ENCODE measurements at regions of chr11 and their contacts with region 1.

Region 1: DNA sequence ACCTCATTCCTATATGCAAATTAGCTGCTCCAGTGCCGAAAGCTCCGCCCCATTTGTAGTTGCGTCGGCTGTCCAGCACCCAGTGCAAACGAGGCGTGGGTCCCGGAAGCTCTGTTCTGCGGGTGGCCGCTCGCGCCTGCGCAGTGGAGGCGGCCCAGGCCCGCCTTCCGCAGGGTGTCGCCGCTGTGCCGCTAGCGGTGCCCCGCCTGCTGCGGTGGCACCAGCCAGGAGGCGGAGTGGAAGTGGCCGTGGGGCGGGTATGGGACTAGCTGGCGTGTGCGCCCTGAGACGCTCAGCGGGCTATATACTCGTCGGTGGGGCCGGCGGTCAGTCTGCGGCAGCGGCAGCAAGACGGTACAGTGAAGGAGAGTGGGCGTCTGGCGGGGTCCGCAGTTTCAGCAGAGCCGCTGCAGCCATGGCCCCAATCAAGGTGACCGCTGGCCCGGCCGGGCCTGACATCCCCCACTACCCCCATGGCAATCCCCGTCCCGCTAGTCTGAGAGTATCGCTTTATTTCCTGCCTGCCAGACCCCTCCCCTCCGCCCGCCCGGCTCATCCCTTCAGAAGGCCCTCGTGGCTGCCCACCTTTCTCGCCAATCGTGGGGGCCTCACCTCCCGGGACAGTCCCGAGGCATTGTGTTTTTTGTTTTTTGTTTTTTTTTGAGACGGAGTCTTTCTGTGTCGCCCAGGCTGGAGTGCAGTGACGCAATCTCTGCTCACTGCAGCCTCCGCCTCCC is at the start of gene PRDX5:
- DNase-seq: peak in 9 of 10 donors; percentile 91 to 97 (median 95)
- ATAC-seq: peak; percentile 77 to 82
- H3K4me3 Mint-ChIP-seq: peak within 1 kb of the TSS; percentile 90 to 97 (median 94)
- H3K27ac Mint-ChIP-seq: peak within 1 kb of the TSS; percentile 97 to 100 (median 99)
- H3K4me1 Mint-ChIP-seq: peaks cover 22 to 45% (median 40%) of the 10 kb centered on the region in 4 donors
- H3K27me3 Mint-ChIP-seq: no peaks in the 10 kb centered on the region
- polyA plus RNA-seq, gene PRDX5: 186 to 239 (median 206) TPM

Region 2: GRCh38 chr11:64204464-64204989 is 113.6 kb before region 1 on chr11:
- POLR2A ChIA-PET with region 1: interaction called, 20 read pairs
- DNase-seq: peak; percentile 73 to 92 (median 84)
- ATAC-seq: peak; percentile 66 to 67
- H3K4me3 Mint-ChIP-seq: peak overlapping the region; percentile 48 to 88 (median 76)
- H3K27ac Mint-ChIP-seq: peak overlapping the region; percentile 82 to 95 (median 92)
- H3K4me1 Mint-ChIP-seq: peaks cover 22 to 50% (median 48%) of the 10 kb centered on the region in 4 donors
- H3K27me3 Mint-ChIP-seq: no peaks in the 10 kb centered on the region

Region 3: DNA sequence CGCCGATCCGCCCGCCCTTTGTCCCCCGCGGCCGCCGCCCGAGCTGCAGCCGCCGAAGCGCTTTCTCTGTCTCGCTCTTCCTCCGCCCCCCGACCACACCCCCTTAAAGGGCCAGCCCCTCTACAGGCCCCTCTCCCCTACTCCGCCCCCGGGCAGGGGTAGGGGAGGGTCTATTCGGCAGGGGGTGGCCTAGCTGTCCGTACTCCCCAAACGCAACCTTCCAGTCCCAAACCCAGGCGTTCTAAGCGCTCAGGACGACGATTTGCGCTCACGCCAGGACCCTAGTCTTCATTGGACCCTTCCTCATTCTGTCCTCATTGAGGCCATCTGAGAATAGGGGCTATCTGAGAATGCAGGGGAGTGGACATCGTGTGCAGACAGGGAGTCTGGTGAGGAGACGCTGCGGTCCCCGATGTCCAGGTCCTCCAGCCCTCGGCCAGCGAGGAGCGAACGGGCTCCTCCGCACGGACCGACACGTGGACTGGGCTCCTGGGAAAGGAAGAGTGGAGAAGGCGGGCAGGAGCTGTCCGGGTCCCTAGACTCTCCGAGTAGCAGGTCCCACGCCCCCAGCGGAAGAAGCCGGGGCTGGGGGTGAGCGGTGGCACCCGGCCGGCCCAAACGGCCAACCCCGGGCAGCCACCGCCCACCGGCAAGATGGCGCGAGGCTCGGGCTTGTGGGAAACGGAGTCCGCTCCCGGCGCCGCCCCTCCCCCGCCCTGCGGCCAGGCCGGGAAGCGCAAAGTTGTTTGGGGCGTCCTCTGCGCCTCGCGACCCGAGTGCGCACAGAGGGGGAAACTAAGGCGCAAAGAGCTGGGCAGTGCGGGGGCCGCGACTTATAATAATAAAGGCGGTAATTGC is 71.0 kb before region 1 on chr11 and contains the start of gene PPP1R14B:
- POLR2A ChIA-PET with region 1: interaction called, 24 read pairs
- DNase-seq: peak; percentile 57 to 87 (median 71)
- ATAC-seq: peak; percentile 65 to 69
- H3K4me3 Mint-ChIP-seq: peak within 1 kb of the TSS; percentile 79 to 92 (median 88)
- H3K27ac Mint-ChIP-seq: peak within 1 kb of the TSS; percentile 13 to 93 (median 82)
- H3K4me1 Mint-ChIP-seq: peaks cover 18 to 53% (median 48%) of the 10 kb centered on the region in 4 donors
- H3K27me3 Mint-ChIP-seq: no peaks in the 10 kb centered on the region
- polyA plus RNA-seq, gene PPP1R14B: 22.4 to 50.6 (median 45.4) TPM

Region 4: DNA sequence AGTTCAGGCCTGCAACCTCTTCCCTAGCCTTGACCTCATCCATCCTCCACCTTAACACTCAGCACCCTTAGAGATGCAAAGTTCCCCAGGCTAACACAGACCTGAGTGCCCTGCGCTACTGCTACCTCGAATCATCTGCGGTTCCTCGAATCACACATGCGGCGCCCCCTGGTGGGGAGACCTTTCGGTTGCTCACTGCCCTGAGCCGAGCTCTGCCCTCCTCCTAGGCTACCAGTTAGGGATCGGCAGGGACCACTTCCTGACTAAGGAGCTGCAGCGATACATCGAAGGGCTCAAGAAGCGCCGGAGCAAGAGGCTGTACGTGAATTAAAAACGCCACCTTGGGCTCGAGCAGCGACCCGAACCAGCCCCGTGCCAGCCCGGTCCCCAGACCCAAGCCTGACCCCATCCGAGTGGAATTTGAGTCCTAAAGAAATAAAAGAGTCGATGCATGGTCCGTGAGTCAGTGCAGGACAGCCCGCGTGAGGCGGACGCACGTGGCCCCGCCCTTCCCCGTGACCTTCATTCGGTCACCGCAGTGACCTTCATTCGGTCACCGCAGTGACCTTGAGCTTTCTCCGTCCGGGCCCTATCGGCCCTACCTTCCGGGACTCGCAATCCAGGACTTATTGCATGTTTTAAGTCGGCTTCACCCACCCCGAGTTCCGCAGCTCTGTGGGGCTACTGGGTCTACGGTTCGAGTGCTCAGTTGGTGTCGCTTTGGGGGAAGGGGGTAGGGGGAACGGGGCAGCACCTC is 13.6 kb before region 1 on chr11:
- POLR2A ChIA-PET with region 1: interaction called, 62 read pairs
- DNase-seq: peak; percentile 83 to 95 (median 90)
- ATAC-seq: peak; percentile 33 to 39
- H3K4me3 Mint-ChIP-seq: peak overlapping the region; percentile 85 to 97 (median 93)
- H3K27ac Mint-ChIP-seq: peak overlapping the region; percentile 87 to 98 (median 95)
- H3K4me1 Mint-ChIP-seq: peaks cover 22 to 47% (median 43%) of the 10 kb centered on the region in 4 donors
- H3K27me3 Mint-ChIP-seq: peaks cover 12 to 18% (median 14%) of the 10 kb centered on the region in 5 donors

Region 5: GRCh38 chr11:64358907-64359711 is 41.0 kb after region 1 on chr11 and contains the start of gene RPS6KA4:
- POLR2A ChIA-PET with region 1: interaction called, 25 read pairs
- DNase-seq: peak in 5 of 10 donors; percentile 35 to 42 (median 38)
- ATAC-seq: peak; percentile 68 to 83
- H3K4me3 Mint-ChIP-seq: peak within 1 kb of the TSS; percentile 86 to 95 (median 92)
- H3K27ac Mint-ChIP-seq: peak within 1 kb of the TSS; percentile 41 to 89 (median 80)
- H3K4me1 Mint-ChIP-seq: peaks cover 11 to 39% (median 32%) of the 10 kb centered on the region in 4 donors
- H3K27me3 Mint-ChIP-seq: no peaks in the 10 kb centered on the region
- polyA plus RNA-seq, gene RPS6KA4: 4.3 to 5.1 (median 5.1) TPM

Measured in naive thymus-derived CD8-positive, alpha-beta T cell (primary cell).